Right cardiac atrium (tissue), 5 donors: ENCODE measurements at regions of chr5 and their contacts with region 1.

Region 1: DNA sequence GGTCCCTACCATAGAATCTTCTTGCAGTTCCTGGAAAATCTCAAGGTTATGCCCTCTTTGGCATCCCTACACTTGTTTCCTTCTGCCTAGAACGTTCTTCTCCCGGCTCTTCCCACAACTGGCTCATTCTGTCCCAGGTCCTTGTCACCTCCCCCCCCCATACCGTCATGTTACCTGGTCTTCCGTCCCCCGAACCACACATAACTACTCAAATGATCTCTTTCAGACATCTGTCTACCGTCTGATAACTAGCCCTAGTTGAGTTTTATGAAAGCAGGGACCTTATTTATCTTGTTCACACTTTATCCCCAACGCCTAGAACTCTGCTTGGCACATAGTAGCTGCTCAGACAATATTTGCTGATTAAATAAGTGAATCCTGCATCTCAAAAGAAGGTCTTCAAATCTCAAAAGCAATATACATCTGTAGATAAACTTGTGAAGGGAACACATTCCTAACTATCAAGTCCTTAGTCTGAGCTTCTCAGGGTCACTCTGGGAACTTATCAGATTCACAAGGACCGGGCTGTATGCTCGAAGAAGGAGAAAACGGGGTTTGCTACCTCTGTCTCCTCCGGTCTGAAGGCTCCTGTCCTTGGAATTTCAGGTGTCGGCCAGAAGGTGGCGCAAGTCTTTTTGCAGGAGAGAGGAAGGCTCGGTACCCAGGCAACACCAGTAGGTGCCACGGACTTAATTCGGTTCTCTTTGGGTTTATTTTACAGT is 30.0 kb downstream of the LCP2 start:
- DNase-seq: peak; percentile 75 to 88 (median 85)
- ATAC-seq: peak; percentile 69 to 81
- H3K4me3 ChIP-seq: no peak overlapping the region
- H3K27ac ChIP-seq: no peak overlapping the region
- H3K4me1 ChIP-seq: no peaks in the 10 kb centered on the region
- H3K27me3 ChIP-seq: no peaks in the 10 kb centered on the region

Region 2: GRCh38 chr5:169527863-169528262 is 739.7 kb before region 1 on chr5:
- intact Hi-C with region 1: no loop called
- DNase-seq: no peak
- ATAC-seq: no peak
- H3K4me3 ChIP-seq: no peak overlapping the region
- H3K27ac ChIP-seq: no peak overlapping the region
- H3K4me1 ChIP-seq: no peaks in the 10 kb centered on the region
- H3K27me3 ChIP-seq: no peaks in the 10 kb centered on the region

Region 3: GRCh38 chr5:169805527-169805934 is 462.1 kb before region 1 on chr5:
- intact Hi-C with region 1: no loop called
- DNase-seq: no peak
- ATAC-seq: no peak
- H3K4me3 ChIP-seq: no peak overlapping the region
- H3K27ac ChIP-seq: no peak overlapping the region
- H3K4me1 ChIP-seq: no peaks in the 10 kb centered on the region
- H3K27me3 ChIP-seq: no peaks in the 10 kb centered on the region

Region 4: GRCh38 chr5:170338933-170339779 is 71.6 kb after region 1 on chr5:
- intact Hi-C with region 1: loop called in 2 of 4 experiments (anchors 5 to 10 kb)
- DNase-seq: no peak
- ATAC-seq: peak; percentile 27 to 47
- H3K4me3 ChIP-seq: no peak overlapping the region
- H3K27ac ChIP-seq: no peak overlapping the region
- H3K4me1 ChIP-seq: no peaks in the 10 kb centered on the region
- H3K27me3 ChIP-seq: no peaks in the 10 kb centered on the region

Region 5: DNA sequence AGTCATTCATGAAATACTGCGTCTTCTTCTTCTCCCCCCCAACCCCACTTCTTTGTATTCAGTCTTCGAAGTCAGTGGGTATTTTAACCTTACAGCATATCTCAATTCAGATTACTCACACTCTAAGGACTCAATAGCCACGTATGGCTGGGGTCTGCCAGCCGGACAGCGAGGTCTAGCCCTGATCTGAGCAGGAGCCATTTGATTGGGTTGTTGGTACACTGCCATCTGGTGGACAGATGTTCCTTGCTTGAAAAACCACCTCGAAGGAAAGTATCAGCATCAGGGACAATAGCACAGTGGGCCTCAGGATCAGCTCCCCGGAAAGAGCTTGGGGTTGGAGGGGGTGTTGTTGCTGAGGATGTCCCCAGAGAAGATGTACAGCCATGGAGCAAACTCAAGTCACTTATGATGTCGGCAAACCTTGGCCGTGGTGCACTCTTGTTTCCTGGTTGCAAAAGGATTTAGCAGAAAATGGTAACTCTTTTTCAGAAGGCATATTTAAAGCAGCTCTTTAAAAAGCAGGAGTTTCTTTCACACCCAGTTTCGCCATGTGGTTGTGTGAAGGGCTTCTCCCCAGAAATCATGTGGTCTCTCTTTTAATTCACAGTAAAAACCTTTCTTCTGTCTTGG is 153.3 kb after region 1 on chr5:
- intact Hi-C with region 1: loop called in 3 of 4 experiments (anchors 5 to 10 kb)
- DNase-seq: peak in 2 of 3 donors; percentile 56 to 66
- ATAC-seq: peak; percentile 63 to 73
- H3K4me3 ChIP-seq: no peak overlapping the region
- H3K27ac ChIP-seq: no peak overlapping the region
- H3K4me1 ChIP-seq: no peaks in the 10 kb centered on the region
- H3K27me3 ChIP-seq: no peaks in the 10 kb centered on the region